Posterior vena cava (tissue), 2 donors: ENCODE measurements at regions of chr7 and their contacts with region 1.

Region 1: DNA sequence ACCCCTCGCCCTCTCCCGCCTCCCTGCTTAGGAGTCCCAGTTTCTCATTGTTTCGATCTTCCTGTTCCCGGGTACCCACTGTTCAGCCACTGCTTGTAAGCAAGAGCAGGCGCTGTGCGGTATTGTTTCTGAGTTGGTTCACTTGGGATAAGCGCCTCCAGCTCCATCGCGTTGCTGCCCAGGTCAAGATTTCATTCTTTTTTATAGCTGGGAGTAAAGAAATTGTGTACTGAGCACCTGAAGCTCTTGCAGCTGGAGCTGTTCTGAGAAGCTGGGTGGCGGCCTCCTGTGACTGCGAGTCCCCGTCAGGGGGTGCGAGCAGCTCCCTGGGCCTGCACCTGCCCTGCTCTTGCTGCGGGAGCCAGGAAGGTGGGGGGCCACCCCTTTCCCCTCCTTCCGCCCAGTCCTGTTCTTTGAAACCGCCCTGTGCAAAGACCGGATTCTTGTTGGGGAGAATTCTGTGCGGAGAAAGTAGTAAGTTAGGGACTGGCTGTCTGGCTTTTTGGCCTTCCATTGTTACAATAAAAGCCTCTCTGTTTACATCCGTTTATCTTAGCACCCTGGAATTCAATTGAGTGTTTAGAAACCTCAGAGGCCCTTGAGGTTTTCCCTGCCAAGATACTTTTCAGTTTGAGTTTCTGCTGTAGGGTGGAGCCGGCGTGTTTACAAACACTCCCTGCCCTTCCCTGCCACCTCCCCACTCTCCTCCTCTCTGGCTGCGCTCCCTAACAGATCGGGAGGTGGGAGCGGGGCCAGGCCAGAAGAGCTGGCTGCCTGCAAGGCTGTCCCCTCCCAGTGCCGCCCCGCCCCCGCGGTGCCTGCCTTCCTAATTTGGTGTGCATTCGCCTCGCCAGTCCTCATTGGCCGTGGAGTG is 30.8 kb upstream of the AP5Z1 start:
- DNase-seq: peak; percentile 100

Region 2: GRCh38 chr7:3461923-3462322 is 1282.7 kb before region 1 on chr7:
- intact Hi-C with region 1: no loop called
- DNase-seq: no peak

Region 3: GRCh38 chr7:4725014-4725849 is 19.4 kb before region 1 on chr7:
- intact Hi-C with region 1: loop called in 1 of 2 experiments (anchors 2 kb)
- DNase-seq: peak; percentile 95

Region 4: DNA sequence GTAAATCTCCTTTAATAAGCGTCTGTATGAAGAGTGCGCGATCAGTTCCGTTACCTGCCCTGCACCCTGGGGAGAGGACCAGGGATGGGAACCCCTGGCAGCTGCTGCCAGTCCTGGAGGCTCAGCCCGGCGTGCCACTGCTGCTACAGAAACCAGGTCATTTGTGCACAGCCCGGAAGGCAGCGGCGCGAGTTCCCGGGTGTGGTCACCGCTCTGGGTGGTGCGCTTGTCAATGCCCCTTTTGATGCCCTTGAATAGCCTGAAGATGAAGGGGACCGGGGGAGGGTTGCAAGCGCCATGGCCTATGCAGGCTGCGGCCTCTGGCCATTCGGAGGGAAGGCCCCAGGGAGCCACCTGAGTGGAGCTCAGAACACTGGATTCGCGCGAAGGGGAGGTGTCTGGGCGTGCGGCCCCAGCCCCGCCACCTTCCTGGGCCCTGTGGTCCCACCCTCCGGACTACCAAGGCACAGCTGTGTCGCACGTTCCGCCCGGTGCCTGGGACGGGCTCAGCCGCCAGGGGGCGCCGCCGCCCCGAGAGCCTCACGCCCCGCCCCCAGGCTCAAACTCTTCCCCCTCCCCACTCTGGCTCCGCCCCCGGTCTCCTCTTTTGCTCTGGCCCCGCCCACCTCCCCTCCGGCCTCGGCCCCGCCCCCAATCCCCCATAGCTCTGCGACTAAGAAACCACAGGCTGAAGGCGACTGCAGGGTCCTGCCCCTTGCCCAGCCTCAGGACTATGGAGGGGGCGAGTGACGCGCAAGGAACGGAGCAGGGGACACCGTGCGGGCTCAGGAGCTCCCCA is 47.3 kb after region 1 on chr7:
- intact Hi-C with region 1: no loop called
- DNase-seq: peak; percentile 92